ENCODE measurements at regions of chr6 and their contacts with region 1.

Region 1: GRCh38 chr6:158793432-158793831 is 25.7 kb downstream of the EZR start:
- DNase-seq: peak in 1 of 5 donors; percentile 46
- H3K4me3 ChIP-seq: no peak overlapping the region
- H3K4me3 Mint-ChIP-seq: peak overlapping the region in 5 of 7 donors; percentile 7 to 63 (median 49)
- H3K27ac ChIP-seq: no peak overlapping the region
- H3K27ac Mint-ChIP-seq: peak overlapping the region; percentile 51 to 93 (median 80)
- H3K4me1 ChIP-seq: peaks cover 74% of the 10 kb centered on the region
- H3K4me1 Mint-ChIP-seq: peaks cover 80 to 96% (median 93%) of the 10 kb centered on the region in 3 donors
- H3K27me3 ChIP-seq: no peaks in the 10 kb centered on the region
- H3K27me3 Mint-ChIP-seq: peaks cover 0 to 2% of the 10 kb centered on the region in 2 donors

Region 2: GRCh38 chr6:158803733-158804143 is 10.3 kb after region 1 on chr6:
- CTCF ChIA-PET with region 1: interaction called, 10 read pairs
- POLR2A ChIA-PET with region 1: interaction called, 5 read pairs
- DNase-seq: peak; percentile 41 to 77 (median 57)
- H3K4me3 ChIP-seq: peak overlapping the region; percentile 42
- H3K4me3 Mint-ChIP-seq: peak overlapping the region; percentile 69 to 86 (median 80)
- H3K27ac ChIP-seq: peak overlapping the region; percentile 59
- H3K27ac Mint-ChIP-seq: peak overlapping the region; percentile 70 to 97 (median 88)
- H3K4me1 ChIP-seq: peaks cover 88% of the 10 kb centered on the region
- H3K4me1 Mint-ChIP-seq: peaks cover 92 to 100% (median 100%) of the 10 kb centered on the region in 3 donors
- H3K27me3 ChIP-seq: no peaks in the 10 kb centered on the region
- H3K27me3 Mint-ChIP-seq: no peaks in the 10 kb centered on the region

Region 3: GRCh38 chr6:158808941-158809678 is 15.7 kb after region 1 on chr6:
- CTCF ChIA-PET with region 1: interaction called, 41 read pairs
- POLR2A ChIA-PET with region 1: interaction called, 8 read pairs
- DNase-seq: peak; percentile 29 to 81 (median 49)
- H3K4me3 ChIP-seq: no peak overlapping the region
- H3K4me3 Mint-ChIP-seq: peak overlapping the region; percentile 54 to 81 (median 67)
- H3K27ac ChIP-seq: peak overlapping the region; percentile 1
- H3K27ac Mint-ChIP-seq: peak overlapping the region; percentile 71 to 96 (median 92)
- H3K4me1 ChIP-seq: peaks cover 94% of the 10 kb centered on the region
- H3K4me1 Mint-ChIP-seq: peaks cover 94 to 100% (median 100%) of the 10 kb centered on the region in 3 donors
- H3K27me3 ChIP-seq: no peaks in the 10 kb centered on the region
- H3K27me3 Mint-ChIP-seq: no peaks in the 10 kb centered on the region

Region 4: DNA sequence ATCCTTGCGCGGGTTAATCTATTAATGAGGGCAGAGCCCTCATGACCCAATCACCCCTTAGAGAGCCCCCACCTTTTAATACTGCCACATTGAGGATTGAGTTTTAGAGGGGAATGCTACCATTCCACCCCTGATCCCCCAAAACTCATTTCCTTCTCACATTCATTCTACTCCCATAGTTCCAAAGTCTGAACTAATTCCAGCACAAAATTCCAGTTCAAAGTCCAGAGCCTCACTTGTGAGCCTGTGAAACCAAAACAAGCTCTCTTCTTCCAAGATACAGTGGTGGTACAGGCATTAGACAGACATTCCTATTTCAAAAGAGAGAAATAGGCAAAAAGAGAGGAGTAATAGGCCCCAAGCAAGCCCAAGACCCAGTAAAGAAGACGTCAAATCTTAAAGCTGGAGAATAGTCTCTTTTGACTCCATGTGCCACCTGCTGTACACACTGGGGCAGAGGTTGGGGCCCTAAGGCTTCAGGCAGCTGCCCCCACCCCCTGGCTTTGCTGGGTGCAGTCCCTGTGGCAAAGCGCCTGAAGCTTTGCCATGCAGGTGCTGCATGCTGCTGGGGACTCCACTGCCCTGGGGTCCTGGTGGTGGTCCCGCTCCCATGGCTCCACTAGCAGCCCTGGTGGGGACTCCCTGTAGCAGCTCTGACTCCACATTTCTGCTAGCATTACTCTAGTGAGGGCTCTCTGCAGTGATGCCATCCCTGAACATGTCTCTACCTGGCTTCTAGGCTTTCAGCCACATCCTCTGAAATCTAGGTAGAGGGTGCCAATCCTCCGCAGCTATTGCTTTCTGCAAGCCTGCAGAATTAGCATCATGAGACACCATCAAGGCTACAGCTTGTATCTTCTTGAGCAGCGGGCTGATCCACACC is 165.3 kb after region 1 on chr6:
- CTCF ChIA-PET with region 1: interaction called, 11 read pairs
- POLR2A ChIA-PET with region 1: interaction called, 6 read pairs
- DNase-seq: peak in 1 of 5 donors; percentile 52
- H3K4me3 ChIP-seq: no peak overlapping the region
- H3K4me3 Mint-ChIP-seq: no peak overlapping the region
- H3K27ac ChIP-seq: no peak overlapping the region
- H3K27ac Mint-ChIP-seq: peak overlapping the region in 3 of 8 donors; percentile 12 to 81 (median 57)
- H3K4me1 ChIP-seq: no peaks in the 10 kb centered on the region
- H3K4me1 Mint-ChIP-seq: peaks cover 0 to 30% (median 4%) of the 10 kb centered on the region in 3 donors
- H3K27me3 ChIP-seq: no peaks in the 10 kb centered on the region
- H3K27me3 Mint-ChIP-seq: peaks cover 0 to 6% of the 10 kb centered on the region in 2 donors

Region 5: GRCh38 chr6:158972241-158973233 is 179.1 kb after region 1 on chr6:
- CTCF ChIA-PET with region 1: interaction called, 22 read pairs
- POLR2A ChIA-PET with region 1: no interaction called
- DNase-seq: peak in 2 of 5 donors; percentile 43 to 55
- H3K4me3 ChIP-seq: no peak overlapping the region
- H3K4me3 Mint-ChIP-seq: no peak overlapping the region
- H3K27ac ChIP-seq: no peak overlapping the region
- H3K27ac Mint-ChIP-seq: peak overlapping the region in 1 of 8 donors; percentile 50
- H3K4me1 ChIP-seq: no peaks in the 10 kb centered on the region
- H3K4me1 Mint-ChIP-seq: peaks cover 0 to 4% (median 4%) of the 10 kb centered on the region in 3 donors
- H3K27me3 ChIP-seq: no peaks in the 10 kb centered on the region
- H3K27me3 Mint-ChIP-seq: no peaks in the 10 kb centered on the region

Measured in CD8-positive, alpha-beta memory T cell (primary cell).